ENCODE measurements at regions of chr4 and their contacts with region 1.

Region 1: GRCh38 chr4:102826890-102827673 is at the start of gene UBE2D3:
- DNase-seq: peak; percentile 93 to 99
- H3K4me3 ChIP-seq: peak within 1 kb of the TSS; percentile 88
- CTCF ChIP-seq: no peak
- POLR2A ChIP-seq: peak in 1 of 2 donors; percentile 88
- total RNA-seq, gene UBE2D3: 391 to 497 (median 418) TPM

Region 2: DNA sequence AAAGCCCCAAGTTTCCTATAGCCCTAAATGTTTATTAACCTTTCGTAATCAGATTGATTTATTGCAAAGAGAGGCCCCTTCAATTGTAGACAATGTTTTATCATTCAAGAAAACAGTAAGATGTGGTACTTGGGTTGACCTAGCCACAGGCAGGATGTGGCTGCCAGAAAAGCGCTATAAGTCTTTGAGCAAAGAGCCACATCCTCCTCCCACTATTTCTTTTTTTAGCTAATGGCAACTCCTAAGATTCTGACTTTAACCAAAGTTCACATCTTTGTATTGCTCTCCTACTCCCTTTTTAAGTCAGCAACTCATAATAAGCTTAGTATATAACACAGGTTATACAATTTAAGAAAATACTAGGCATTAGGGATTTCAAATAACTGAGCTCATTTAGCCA is 1409.0 kb before region 1 on chr4:
- intact Hi-C with region 1: no loop called
- DNase-seq: no peak
- H3K4me3 ChIP-seq: no peak overlapping the region
- CTCF ChIP-seq: no peak
- POLR2A ChIP-seq: no peak

Region 3: GRCh38 chr4:102500696-102501446 is 326.2 kb before region 1 on chr4 and contains the start of gene NFKB1:
- intact Hi-C with region 1: loop called (anchors 5 kb)
- DNase-seq: peak; percentile 45 to 92
- H3K4me3 ChIP-seq: peak within 1 kb of the TSS; percentile 89
- CTCF ChIP-seq: no peak
- POLR2A ChIP-seq: no peak
- total RNA-seq, gene NFKB1: 37.9 to 45.5 (median 43.4) TPM

Region 4: GRCh38 chr4:102868781-102869568 is 41.9 kb after region 1 on chr4 and contains the start of gene CISD2:
- intact Hi-C with region 1: loop called (anchors 2 kb)
- DNase-seq: peak; percentile 90 to 98
- H3K4me3 ChIP-seq: peak within 1 kb of the TSS; percentile 41
- CTCF ChIP-seq: peak in 1 of 3 donors; percentile 50
- POLR2A ChIP-seq: peak in 1 of 2 donors; percentile 86
- total RNA-seq, gene CISD2: 5.5 to 12.0 (median 11.3) TPM

Region 5: DNA sequence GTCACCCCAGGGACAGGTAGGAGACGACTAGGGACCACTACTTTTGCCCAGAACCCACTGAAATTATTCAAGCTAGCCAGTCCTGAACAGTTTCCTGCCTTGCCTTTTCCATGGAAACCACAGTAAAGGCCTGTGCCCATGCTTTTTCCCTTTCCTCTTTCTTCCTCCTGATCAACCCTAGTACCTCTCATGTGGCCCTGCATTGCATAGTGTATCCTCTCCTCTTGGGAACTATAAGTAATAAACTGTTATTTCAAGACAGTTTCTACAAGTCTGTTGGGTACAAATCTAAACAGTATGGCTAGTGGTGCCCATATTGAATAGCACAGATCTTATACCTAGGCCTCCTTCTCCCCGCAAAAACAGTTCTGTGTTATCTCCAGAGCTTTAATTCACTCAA is 56.2 kb after region 1 on chr4:
- intact Hi-C with region 1: no loop called
- DNase-seq: no peak
- H3K4me3 ChIP-seq: no peak overlapping the region
- CTCF ChIP-seq: no peak
- POLR2A ChIP-seq: no peak